ENCODE measurements at regions of chr11 and their contacts with region 1.

Region 1: DNA sequence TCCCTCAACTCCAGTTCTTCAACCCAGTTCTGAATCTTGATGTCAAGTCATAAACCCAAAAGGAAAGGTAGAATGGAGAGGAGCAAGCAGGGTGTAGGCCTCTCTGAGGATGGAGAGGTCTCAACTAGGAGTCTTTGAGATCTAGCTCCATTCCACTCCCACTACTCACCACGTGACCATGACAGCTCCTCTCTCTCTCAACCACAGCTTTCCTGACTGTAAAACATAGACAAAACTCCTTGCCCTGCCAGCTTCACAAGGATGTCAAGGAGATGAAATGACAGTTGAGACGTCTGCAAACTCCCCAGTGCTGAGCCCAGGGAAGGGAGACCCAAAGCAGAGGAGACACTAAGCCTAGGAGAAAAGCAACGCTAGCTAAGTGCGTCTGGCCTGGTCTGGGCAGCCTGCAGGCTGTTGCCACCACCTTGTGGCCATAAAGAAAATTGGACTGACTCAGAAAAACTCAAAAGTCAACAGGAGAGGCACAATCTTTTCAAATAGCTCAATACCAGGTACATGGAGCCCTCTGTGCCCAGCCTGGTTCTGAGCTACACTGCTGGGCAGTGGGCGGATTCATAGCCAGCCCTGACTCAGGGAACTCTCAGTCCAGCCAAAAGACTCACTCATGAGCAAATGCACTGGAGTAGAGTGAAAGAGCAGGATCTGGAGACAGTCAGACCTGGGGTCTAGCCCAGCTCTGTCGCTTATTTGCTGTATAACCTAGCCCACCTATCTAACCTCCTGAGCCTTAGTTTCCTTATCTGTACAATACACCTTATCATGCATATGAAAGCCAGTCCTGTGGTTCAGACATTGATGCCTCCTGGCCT is 3.4 kb downstream of the CLPB start:
- DNase-seq: peak in 4 of 5 donors; percentile 30 to 46 (median 40)
- H3K4me3 ChIP-seq: no peak overlapping the region
- H3K4me3 Mint-ChIP-seq: peak overlapping the region in 7 of 8 donors; percentile 0 to 74 (median 28)
- H3K27ac ChIP-seq: no peak overlapping the region
- H3K27ac Mint-ChIP-seq: peak overlapping the region in 5 of 7 donors; percentile 28 to 64 (median 46)
- H3K4me1 ChIP-seq: peaks cover 26% of the 10 kb centered on the region
- H3K4me1 Mint-ChIP-seq: peaks cover 17 to 42% (median 35%) of the 10 kb centered on the region in 4 donors
- H3K27me3 ChIP-seq: no peaks in the 10 kb centered on the region
- H3K27me3 Mint-ChIP-seq: peaks cover 0 to 1% of the 10 kb centered on the region in 2 donors

Region 2: DNA sequence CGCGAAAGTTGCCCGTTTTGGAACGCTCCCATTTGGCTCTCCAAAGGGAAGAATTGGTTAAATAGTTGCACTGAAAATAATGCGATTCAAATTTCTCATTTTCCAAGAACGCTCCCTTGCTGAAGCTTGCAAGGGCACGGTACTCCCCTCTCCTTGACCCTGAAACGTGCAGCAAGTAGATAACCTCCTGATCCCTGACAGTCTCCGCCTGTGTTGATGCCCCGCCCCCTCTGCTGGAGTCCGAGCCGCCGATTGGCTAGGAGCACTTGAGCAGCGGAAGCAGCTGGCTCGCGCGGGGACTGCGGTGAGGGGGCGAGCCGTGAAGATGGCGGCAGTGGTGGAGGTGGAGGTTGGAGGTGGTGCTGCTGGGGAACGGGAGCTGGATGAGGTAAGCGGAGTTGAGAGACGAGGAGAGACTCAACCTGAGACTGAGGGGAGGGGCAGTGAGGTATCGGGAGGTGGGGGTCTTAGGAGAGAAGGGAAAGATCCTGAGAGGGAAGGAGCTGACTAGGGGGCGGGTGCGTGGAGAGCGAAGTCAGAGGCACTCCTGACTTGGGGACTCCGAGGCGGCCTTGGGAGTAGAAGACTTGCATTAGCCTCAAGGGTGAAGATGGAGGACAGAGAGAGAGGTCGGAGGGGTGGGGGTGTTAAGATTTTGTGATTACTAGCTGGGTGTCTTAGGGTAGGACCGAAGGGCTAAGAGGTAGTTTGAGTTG is 502.1 kb before region 1 on chr11 and contains the start of gene RNF121:
- CTCF ChIA-PET with region 1: interaction called, 4 read pairs
- POLR2A ChIA-PET with region 1: no interaction called
- intact Hi-C with region 1: loop called (anchors 5 kb)
- DNase-seq: peak; percentile 96 to 99 (median 96)
- H3K4me3 ChIP-seq: peak within 1 kb of the TSS; percentile 92 to 96
- H3K4me3 Mint-ChIP-seq: peak within 1 kb of the TSS; percentile 95 to 100 (median 98)
- H3K27ac ChIP-seq: peak within 1 kb of the TSS; percentile 84
- H3K27ac Mint-ChIP-seq: peak within 1 kb of the TSS; percentile 92 to 100 (median 99)
- H3K4me1 ChIP-seq: peaks cover 41% of the 10 kb centered on the region
- H3K4me1 Mint-ChIP-seq: peaks cover 40 to 60% (median 50%) of the 10 kb centered on the region in 4 donors
- H3K27me3 ChIP-seq: no peaks in the 10 kb centered on the region
- H3K27me3 Mint-ChIP-seq: no peaks in the 10 kb centered on the region
- total RNA-seq, gene RNF121: 28.0 to 33.0 TPM

Region 3: DNA sequence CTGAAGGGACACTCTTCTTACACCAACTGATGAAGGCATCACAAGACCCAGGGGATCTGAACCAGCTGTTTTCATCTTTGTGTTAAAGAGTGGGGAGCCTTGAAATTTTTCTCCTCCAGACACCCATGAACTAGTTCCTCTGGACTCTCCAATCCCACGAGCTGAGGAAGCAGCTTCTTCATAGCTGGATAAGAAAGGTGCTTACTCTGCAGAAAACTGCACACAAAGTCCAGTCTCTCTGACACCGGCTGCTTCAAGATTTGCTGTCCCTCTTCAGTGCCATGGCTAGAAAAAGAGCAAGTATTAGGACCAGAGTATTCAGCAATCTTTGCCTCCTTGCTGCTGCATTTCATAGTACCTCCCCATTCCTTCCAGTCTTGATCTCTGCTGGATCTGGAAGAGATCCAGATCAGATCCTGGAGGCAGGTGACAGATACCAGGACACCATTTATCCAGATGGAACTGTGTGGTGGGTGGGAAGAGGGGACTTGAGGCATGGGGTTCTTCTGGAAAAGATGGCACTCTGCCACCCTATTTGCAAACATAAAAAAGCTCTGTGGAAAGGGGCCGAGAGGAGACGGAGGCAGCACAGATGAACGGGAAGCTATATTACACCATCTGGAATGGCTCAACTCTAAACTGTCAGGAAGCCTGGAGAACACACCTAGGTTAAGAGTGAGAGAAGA is 406.7 kb before region 1 on chr11:
- CTCF ChIA-PET with region 1: interaction called, 11 read pairs
- POLR2A ChIA-PET with region 1: no interaction called
- intact Hi-C with region 1: no loop called
- DNase-seq: no peak
- H3K4me3 ChIP-seq: no peak overlapping the region
- H3K4me3 Mint-ChIP-seq: no peak overlapping the region
- H3K27ac ChIP-seq: no peak overlapping the region
- H3K27ac Mint-ChIP-seq: peak overlapping the region in 2 of 7 donors; percentile 61 to 68
- H3K4me1 ChIP-seq: peaks cover 25% of the 10 kb centered on the region
- H3K4me1 Mint-ChIP-seq: peaks cover 15 to 34% (median 27%) of the 10 kb centered on the region in 4 donors
- H3K27me3 ChIP-seq: no peaks in the 10 kb centered on the region
- H3K27me3 Mint-ChIP-seq: no peaks in the 10 kb centered on the region

Region 4: DNA sequence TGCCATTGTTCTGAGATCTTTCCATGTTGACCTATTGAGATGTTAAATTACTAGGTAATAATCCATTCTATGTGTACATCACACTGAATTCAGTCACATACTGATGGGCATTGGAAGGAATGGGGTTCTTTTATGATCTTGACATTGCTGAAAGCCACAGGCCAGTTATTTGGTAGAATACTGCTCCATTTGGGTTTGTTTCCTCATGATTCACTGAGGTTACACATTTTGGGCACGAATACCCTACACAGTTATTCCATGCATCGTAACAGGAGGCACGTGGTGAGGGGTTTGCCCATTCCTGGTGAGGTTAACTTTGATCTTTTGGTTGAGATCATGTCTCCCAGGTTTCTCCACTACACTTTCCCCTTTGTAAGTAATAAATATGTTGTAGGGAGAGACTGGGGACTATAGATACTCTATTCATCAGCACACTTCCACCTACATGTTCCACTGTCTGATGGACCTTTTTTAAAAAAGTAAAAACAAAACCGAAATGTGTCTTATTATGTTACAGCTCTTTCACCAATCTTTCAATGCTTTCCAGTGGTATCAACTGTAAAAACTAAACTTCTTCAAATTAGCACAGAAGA is 251.1 kb before region 1 on chr11:
- CTCF ChIA-PET with region 1: interaction called, 12 read pairs
- POLR2A ChIA-PET with region 1: no interaction called
- intact Hi-C with region 1: loop called (anchors 5 kb)
- DNase-seq: no peak
- H3K4me3 ChIP-seq: no peak overlapping the region
- H3K4me3 Mint-ChIP-seq: no peak overlapping the region
- H3K27ac ChIP-seq: no peak overlapping the region
- H3K27ac Mint-ChIP-seq: no peak overlapping the region
- H3K4me1 ChIP-seq: no peaks in the 10 kb centered on the region
- H3K4me1 Mint-ChIP-seq: peaks cover 0 to 4% (median 3%) of the 10 kb centered on the region in 4 donors
- H3K27me3 ChIP-seq: no peaks in the 10 kb centered on the region
- H3K27me3 Mint-ChIP-seq: peaks cover 10 to 12% of the 10 kb centered on the region in 2 donors

Region 5: GRCh38 chr11:72293910-72294615 is 136.9 kb before region 1 on chr11:
- CTCF ChIA-PET with region 1: interaction called, 17 read pairs
- POLR2A ChIA-PET with region 1: no interaction called
- intact Hi-C with region 1: loop called (anchors 5 kb)
- DNase-seq: no peak
- H3K4me3 ChIP-seq: no peak overlapping the region
- H3K4me3 Mint-ChIP-seq: no peak overlapping the region
- H3K27ac ChIP-seq: no peak overlapping the region
- H3K27ac Mint-ChIP-seq: peak overlapping the region in 1 of 7 donors; percentile 15
- H3K4me1 ChIP-seq: no peaks in the 10 kb centered on the region
- H3K4me1 Mint-ChIP-seq: no peaks in the 10 kb centered on the region
- H3K27me3 ChIP-seq: no peaks in the 10 kb centered on the region
- H3K27me3 Mint-ChIP-seq: no peaks in the 10 kb centered on the region

Region 6: GRCh38 chr11:72326151-72326848 is 104.7 kb before region 1 on chr11:
- CTCF ChIA-PET with region 1: no interaction called
- POLR2A ChIA-PET with region 1: no interaction called
- intact Hi-C with region 1: no loop called
- DNase-seq: no peak
- H3K4me3 ChIP-seq: no peak overlapping the region
- H3K4me3 Mint-ChIP-seq: no peak overlapping the region
- H3K27ac ChIP-seq: no peak overlapping the region
- H3K27ac Mint-ChIP-seq: peak overlapping the region in 1 of 7 donors; percentile 72
- H3K4me1 ChIP-seq: no peaks in the 10 kb centered on the region
- H3K4me1 Mint-ChIP-seq: no peaks in the 10 kb centered on the region
- H3K27me3 ChIP-seq: no peaks in the 10 kb centered on the region
- H3K27me3 Mint-ChIP-seq: no peaks in the 10 kb centered on the region

Region 7: DNA sequence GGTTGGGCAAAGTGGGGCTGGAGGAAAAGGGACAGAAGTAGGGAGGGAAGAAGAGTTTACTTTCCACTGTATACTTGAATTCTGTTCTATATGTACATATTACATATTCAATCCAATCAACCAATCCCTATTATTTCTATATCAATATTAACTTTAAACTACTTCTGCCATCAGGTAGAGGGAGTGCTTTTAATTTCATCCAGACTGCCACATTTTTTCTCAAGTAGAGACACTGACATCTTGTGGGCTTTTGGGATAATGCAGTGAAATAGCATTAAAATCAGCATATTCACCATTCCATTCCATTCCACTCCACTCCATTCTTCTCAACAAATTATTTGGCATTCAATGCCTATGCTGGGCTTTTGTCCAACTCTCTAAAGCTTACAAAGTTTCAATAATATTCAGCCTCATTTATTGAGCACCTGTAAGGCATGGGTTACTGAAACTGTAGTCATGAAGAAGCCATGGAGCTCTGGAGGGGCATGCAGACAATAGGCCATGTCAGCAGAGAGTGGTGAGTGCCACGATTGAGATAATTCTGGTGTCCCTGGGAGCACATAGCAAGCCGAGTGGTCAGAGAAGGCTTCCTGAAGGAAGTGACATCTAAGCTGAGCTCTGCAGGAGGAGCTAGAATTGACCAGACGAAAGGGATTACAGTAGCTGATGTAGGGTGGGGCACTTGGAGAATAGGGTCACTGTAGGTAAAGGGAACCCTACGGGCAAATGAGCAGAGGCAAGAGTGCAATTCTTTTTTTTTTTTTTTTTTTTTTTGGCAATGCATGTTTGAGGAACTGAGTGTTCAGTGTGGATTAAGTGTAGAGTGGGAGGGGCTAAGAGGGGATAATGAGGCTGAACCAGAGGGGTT is 16.2 kb after region 1 on chr11:
- CTCF ChIA-PET with region 1: interaction called, 58 read pairs
- POLR2A ChIA-PET with region 1: no interaction called
- intact Hi-C with region 1: no loop called
- DNase-seq: peak in 4 of 5 donors; percentile 40 to 60 (median 44)
- H3K4me3 ChIP-seq: no peak overlapping the region
- H3K4me3 Mint-ChIP-seq: no peak overlapping the region
- H3K27ac ChIP-seq: no peak overlapping the region
- H3K27ac Mint-ChIP-seq: peak overlapping the region in 1 of 7 donors; percentile 21
- H3K4me1 ChIP-seq: no peaks in the 10 kb centered on the region
- H3K4me1 Mint-ChIP-seq: no peaks in the 10 kb centered on the region
- H3K27me3 ChIP-seq: no peaks in the 10 kb centered on the region
- H3K27me3 Mint-ChIP-seq: peaks cover 1 to 10% of the 10 kb centered on the region in 2 donors

Region 8: DNA sequence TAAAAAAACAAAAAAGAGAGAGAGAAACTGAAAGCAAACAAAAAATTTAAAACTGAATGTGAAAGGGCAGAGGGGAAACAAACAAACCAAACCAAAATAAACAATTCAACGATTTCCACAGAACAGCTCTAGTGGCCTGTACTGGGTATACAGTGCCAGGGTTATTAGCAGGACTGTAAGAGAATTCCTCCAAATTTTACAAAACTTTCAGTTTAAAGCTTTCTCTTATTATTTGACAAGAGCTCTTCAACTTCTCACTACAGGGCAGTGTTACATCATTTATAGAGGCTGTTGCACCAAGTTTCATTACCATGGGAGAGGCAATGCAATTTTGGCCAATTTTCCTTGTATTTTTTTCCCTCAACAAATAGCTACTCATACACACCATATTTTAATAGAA is 47.7 kb after region 1 on chr11:
- CTCF ChIA-PET with region 1: no interaction called
- POLR2A ChIA-PET with region 1: no interaction called
- intact Hi-C with region 1: no loop called
- DNase-seq: no peak
- H3K4me3 ChIP-seq: no peak overlapping the region
- H3K4me3 Mint-ChIP-seq: no peak overlapping the region
- H3K27ac ChIP-seq: no peak overlapping the region
- H3K27ac Mint-ChIP-seq: peak overlapping the region in 1 of 7 donors; percentile 50
- H3K4me1 ChIP-seq: peaks cover 3% of the 10 kb centered on the region
- H3K4me1 Mint-ChIP-seq: peaks cover 6 to 9% (median 7%) of the 10 kb centered on the region in 4 donors
- H3K27me3 ChIP-seq: no peaks in the 10 kb centered on the region
- H3K27me3 Mint-ChIP-seq: peaks cover 0 to 7% of the 10 kb centered on the region in 2 donors

Measured in CD4-positive, alpha-beta memory T cell (primary cell).